ENCODE measurements at regions of chr3 and their contacts with region 1.

Region 1: GRCh38 chr3:122533931-122534334 is 19.2 kb upstream of the KPNA1 start:
- DNase-seq: peak; percentile 77
- H3K4me3 Mint-ChIP-seq: no peak overlapping the region
- H3K27ac Mint-ChIP-seq: peak overlapping the region; percentile 28
- H3K4me1 Mint-ChIP-seq: peaks cover 35% of the 10 kb centered on the region
- H3K27me3 Mint-ChIP-seq: no peaks in the 10 kb centered on the region

Region 2: DNA sequence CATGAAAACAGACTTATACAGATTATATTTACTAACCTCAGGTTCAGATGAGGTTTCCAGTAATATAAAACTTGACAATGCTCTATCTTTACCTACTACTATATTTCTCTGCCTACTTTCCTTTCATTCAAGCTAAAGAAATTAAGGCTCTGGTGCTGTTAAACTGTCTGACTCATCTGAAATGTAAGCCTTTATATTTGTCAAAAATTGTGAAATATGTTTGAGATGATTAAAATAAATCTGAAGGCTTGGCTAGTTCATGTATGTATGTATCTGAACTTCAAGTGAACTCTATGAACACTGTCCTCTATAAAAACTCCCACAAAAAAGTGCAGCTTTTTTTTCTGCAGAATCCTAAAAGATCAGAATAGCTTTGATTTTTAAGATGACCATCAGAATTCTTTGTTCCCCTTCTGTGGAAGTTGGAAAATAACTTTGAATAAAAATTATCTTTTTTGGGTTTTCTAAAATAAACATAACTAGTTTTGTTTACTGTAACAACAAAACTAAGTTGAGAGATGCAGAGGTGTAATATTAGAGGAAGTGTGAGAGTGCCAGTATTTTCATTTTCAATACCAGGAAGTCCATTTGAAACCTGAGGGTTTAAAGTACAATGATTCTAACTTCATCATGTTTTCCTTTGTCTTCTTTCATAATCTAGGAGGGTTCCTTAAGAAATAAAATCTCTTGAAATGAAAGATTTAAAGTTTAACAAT is 554.0 kb before region 1 on chr3:
- CTCF ChIA-PET with region 1: no interaction called
- intact Hi-C with region 1: no loop called
- DNase-seq: no peak
- H3K4me3 Mint-ChIP-seq: no peak overlapping the region
- H3K27ac Mint-ChIP-seq: no peak overlapping the region
- H3K4me1 Mint-ChIP-seq: no peaks in the 10 kb centered on the region
- H3K27me3 Mint-ChIP-seq: no peaks in the 10 kb centered on the region

Region 3: GRCh38 chr3:122458992-122459391 is 74.9 kb before region 1 on chr3:
- CTCF ChIA-PET with region 1: no interaction called
- intact Hi-C with region 1: loop called (anchors 2 kb)
- DNase-seq: no peak
- H3K4me3 Mint-ChIP-seq: no peak overlapping the region
- H3K27ac Mint-ChIP-seq: no peak overlapping the region
- H3K4me1 Mint-ChIP-seq: peaks cover 8% of the 10 kb centered on the region
- H3K27me3 Mint-ChIP-seq: no peaks in the 10 kb centered on the region

Region 4: DNA sequence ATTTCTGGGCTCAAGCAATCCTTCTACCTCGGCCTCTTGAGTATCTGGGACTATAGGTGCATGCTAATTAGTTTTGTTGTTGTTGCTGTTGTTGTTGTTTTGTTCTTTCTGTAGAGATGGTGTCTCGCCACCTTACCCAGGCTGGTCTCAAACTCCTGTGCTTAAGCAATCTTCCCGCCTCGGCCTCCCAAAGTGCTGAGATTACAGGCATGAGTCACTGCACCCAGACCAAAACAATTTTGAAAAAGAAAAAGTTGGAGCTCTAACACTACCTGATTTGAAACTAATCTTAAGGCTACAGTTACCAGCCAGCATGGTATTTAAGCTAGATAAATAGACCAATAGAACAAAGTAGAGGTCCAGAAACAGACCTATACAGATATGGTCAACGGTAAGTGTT is 48.9 kb before region 1 on chr3:
- CTCF ChIA-PET with region 1: interaction called, 3 read pairs
- intact Hi-C with region 1: loop called (anchors 1 kb)
- DNase-seq: no peak
- H3K4me3 Mint-ChIP-seq: no peak overlapping the region
- H3K27ac Mint-ChIP-seq: no peak overlapping the region
- H3K4me1 Mint-ChIP-seq: peaks cover 66% of the 10 kb centered on the region
- H3K27me3 Mint-ChIP-seq: no peaks in the 10 kb centered on the region

Region 5: DNA sequence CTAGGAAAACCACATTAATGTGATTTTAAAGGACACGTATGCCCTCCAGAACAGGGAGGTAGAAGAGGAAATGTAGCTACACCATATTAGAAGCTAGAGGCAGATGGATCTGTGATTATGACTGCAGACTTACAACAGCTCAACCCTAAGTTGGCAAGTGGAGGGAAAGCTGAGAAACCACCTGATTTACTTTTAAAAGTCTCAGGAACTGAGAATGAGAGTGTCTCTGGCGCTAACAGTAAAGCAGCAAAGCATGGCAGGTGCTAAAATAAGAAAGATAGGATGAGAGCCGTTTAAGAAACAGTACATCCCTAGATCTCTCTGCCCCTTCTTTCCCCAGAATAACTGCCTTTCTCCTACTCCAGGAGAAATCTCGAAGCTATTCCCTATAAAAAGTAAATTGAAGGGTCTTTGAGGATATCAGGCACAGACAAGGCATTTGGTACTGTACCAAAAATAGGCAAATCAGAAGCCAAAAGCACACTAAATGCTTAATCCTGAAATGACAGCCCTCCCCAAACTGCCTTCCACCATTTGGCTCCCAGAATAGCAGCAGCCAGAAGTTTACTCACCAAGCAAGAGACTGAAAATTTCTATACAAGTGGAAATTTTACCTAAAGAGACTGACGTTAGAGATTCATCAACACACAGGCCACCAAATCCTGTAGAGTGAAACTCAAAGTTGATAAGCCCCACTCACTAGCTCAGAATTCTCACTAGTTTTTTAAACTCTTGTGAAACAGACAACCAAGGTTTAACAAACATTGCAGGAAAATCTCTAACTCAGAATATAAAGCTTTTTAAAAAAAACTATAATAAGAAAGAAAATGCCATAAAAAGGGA is 112.4 kb after region 1 on chr3:
- CTCF ChIA-PET with region 1: no interaction called
- intact Hi-C with region 1: no loop called
- DNase-seq: peak; percentile 28
- H3K4me3 Mint-ChIP-seq: peak overlapping the region; percentile 28
- H3K27ac Mint-ChIP-seq: peak overlapping the region; percentile 82
- H3K4me1 Mint-ChIP-seq: peaks cover 31% of the 10 kb centered on the region
- H3K27me3 Mint-ChIP-seq: peaks cover 2% of the 10 kb centered on the region

Measured in activated naive CD4-positive, alpha-beta T cell treated with anti-CD3 and anti-CD28 coated beads for 36 hours (primary cell).